HEK293 (cell line): ENCODE measurements at regions of chr5 and their contacts with region 1.

Region 1: DNA sequence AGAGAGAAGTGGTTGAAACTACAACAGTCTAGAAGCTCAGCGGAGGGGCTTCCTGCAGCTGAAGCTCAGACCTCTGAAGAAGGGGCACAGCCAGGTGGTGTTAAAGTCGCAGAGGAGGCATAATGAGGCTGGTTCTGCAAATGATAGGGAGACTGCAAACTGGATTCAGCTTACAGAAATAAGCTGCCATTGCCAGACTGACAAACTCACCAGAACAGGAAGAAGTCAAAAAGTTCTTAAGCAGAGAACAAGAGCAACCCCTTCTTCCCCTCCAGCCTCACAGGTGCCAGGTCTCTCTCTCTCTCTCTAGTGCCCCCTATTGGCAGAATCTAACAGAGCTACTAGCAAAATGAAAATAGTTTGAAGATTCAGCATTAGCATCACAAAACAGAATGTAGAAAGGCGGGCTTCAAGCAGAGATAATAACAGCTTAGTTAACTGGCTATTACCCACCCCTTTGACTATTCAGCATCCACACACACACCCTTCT is 76.7 kb downstream of the GRAMD2B start:
- H3K4me3 ChIP-seq: no peak overlapping the region
- H3K27ac ChIP-seq: no peak overlapping the region
- H3K4me1 ChIP-seq: no peaks in the 10 kb centered on the region; the same call in 1 of the 2 replicates
- CTCF ChIP-seq: 0 out of 2 replicates have a peak, but pooled peaks have one; percentile 29

Region 2: DNA sequence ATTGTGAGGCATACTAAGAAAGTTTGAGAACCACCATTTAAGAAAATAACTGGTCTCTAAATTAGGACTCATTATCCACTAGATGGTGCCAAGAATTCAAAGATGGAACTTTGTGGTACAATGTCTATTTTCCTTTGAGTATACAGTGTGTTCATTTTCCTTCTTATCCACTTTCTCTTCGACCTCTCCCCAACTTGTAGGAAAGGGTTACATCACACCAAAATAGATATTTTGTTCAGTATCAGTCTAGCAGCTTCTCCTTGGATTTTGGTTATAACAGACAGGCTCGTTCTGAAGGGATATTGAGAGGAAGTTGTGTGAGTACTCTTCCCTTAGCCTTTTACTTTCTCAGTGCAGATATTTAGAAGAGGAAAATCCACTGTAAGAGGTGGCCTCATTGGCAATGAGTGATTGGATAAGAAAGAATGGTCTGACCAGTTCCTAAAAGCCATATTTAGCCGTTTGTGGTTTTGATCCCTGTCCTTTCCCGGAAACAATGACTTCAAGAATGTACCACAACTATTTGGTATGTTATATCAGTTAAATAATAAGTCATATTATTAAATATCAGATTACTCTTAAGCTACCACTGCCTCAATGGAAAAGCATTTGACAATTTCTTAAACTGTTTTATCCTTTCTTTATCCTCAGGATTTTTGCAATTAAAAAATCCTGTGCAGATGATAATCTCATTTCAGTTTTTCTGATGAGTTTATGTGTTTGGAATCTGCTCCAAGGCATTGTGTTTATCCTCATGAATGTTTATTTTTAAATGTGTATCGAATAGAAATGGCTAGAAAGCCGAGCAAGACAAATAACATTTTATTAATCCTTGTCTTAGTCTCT is 145.7 kb before region 1 on chr5:
- CTCF ChIA-PET with region 1: interaction called, 26 read pairs
- POLR2A ChIA-PET with region 1: no interaction called
- H3K4me3 ChIP-seq: peak overlapping the region; percentile 17
- H3K27ac ChIP-seq: no peak overlapping the region
- H3K4me1 ChIP-seq: no peaks in the 10 kb centered on the region
- CTCF ChIP-seq: peak; percentile 54; the same call in 1 of the 2 replicates

Region 3: GRCh38 chr5:126422989-126423788 is 76.7 kb before region 1 on chr5 and contains the start of gene GRAMD2B:
- CTCF ChIA-PET with region 1: interaction called, 19 read pairs
- POLR2A ChIA-PET with region 1: no interaction called
- H3K4me3 ChIP-seq: peak within 1 kb of the TSS; percentile 68
- H3K27ac ChIP-seq: peak within 1 kb of the TSS; percentile 95
- H3K4me1 ChIP-seq: peaks cover 10% of the 10 kb centered on the region; the same call in 1 of the 2 replicates
- CTCF ChIP-seq: no peak

Region 4: DNA sequence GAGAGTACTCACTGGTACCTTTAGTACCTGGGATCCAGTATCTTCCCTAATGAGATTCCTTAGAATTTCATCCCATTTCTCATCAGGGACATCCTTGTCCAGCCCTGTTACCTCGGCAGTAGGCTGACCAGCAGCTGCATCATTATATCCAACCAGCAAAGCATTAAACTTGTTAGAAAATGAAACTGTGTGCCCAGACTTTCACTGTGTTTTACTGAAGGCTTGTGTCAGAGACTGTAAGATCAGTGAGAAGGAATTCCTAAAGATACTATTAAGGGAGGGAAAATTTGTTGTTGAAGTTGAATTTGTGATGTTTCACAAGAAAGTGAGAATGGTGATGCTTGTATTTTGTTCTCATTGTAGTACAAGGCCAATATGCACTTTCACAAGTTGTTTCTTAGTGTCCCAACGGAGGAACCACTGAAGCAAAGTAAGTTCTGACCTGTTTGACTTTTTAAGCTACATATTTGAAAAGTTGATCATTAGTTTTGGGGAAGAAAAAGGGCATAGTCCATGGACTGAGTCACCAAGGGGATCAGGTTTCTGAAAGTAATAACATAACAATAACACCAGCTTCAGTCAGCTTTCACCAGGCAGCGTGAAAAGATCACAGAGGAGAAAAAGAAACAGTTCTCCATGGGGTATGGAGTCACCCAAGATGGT is 27.9 kb before region 1 on chr5:
- CTCF ChIA-PET with region 1: interaction called, 15 read pairs
- POLR2A ChIA-PET with region 1: no interaction called
- H3K4me3 ChIP-seq: no peak overlapping the region
- H3K27ac ChIP-seq: no peak overlapping the region
- H3K4me1 ChIP-seq: peaks cover 2% of the 10 kb centered on the region; the same call in 1 of the 2 replicates
- CTCF ChIP-seq: no peak

Region 5: GRCh38 chr5:126477294-126478117 is 22.4 kb before region 1 on chr5:
- CTCF ChIA-PET with region 1: interaction called, 15 read pairs
- POLR2A ChIA-PET with region 1: no interaction called
- H3K4me3 ChIP-seq: no peak overlapping the region
- H3K27ac ChIP-seq: no peak overlapping the region
- H3K4me1 ChIP-seq: no peaks in the 10 kb centered on the region
- CTCF ChIP-seq: no peak

Region 6: GRCh38 chr5:126516133-126516532 is 16.2 kb after region 1 on chr5:
- CTCF ChIA-PET with region 1: interaction called, 28 read pairs
- POLR2A ChIA-PET with region 1: no interaction called
- H3K4me3 ChIP-seq: no peak overlapping the region
- H3K27ac ChIP-seq: peak overlapping the region; percentile 66
- H3K4me1 ChIP-seq: peaks cover 29% of the 10 kb centered on the region
- CTCF ChIP-seq: no peak

Region 7: GRCh38 chr5:126536874-126537273 is 37.0 kb after region 1 on chr5:
- CTCF ChIA-PET with region 1: interaction called, 32 read pairs
- POLR2A ChIA-PET with region 1: no interaction called
- H3K4me3 ChIP-seq: no peak overlapping the region
- H3K27ac ChIP-seq: no peak overlapping the region
- H3K4me1 ChIP-seq: 0 out of 2 replicates have a peak, but pooled peaks cover 2% of the 10 kb centered on the region
- CTCF ChIP-seq: no peak

Region 8: GRCh38 chr5:126676195-126676624 is 176.3 kb after region 1 on chr5:
- CTCF ChIA-PET with region 1: no interaction called
- POLR2A ChIA-PET with region 1: no interaction called
- H3K4me3 ChIP-seq: no peak overlapping the region
- H3K27ac ChIP-seq: no peak overlapping the region
- H3K4me1 ChIP-seq: no peaks in the 10 kb centered on the region
- CTCF ChIP-seq: peak; percentile 83